Thyroid gland (tissue), 4 donors: ENCODE measurements at regions of chr14 and their contacts with region 1.

Region 1: GRCh38 chr14:30369502-30370180 is 189.3 kb upstream of the G2E3 start:
- DNase-seq: no peak
- H3K4me3 ChIP-seq: no peak overlapping the region
- H3K27ac ChIP-seq: no peak overlapping the region
- H3K4me1 ChIP-seq: no peaks in the 10 kb centered on the region
- H3K27me3 ChIP-seq: no peaks in the 10 kb centered on the region
- CTCF ChIP-seq: no peak
- POLR2A ChIP-seq: no peak

Region 2: GRCh38 chr14:30443368-30444007 is 73.8 kb after region 1 on chr14:
- intact Hi-C with region 1: loop called (anchors 5 kb)
- DNase-seq: peak in 1 of 2 donors; percentile 1
- H3K4me3 ChIP-seq: no peak overlapping the region
- H3K27ac ChIP-seq: no peak overlapping the region
- H3K4me1 ChIP-seq: no peaks in the 10 kb centered on the region
- H3K27me3 ChIP-seq: no peaks in the 10 kb centered on the region
- CTCF ChIP-seq: peak in 4 of 6 experiments; percentile 52 to 82 (median 72)
- POLR2A ChIP-seq: no peak